IMR-90 (cell line): ENCODE measurements at regions of chr9 and their contacts with region 1.

Region 1: GRCh38 chr9:105425841-105426436 is 21.9 kb upstream of the FSD1L start:
- DNase-seq: peak; percentile 47
- ATAC-seq: peak; percentile 88
- H3K4me3 ChIP-seq: no peak overlapping the region
- H3K27ac ChIP-seq: no peak overlapping the region
- H3K4me1 ChIP-seq: no peaks in the 10 kb centered on the region
- H3K27me3 ChIP-seq: no peaks in the 10 kb centered on the region
- CTCF ChIP-seq: peak; percentile 71
- POLR2A ChIP-seq: no peak
- RAD21 ChIP-seq: peak; percentile 76

Region 2: GRCh38 chr9:105457560-105458294 is 31.8 kb after region 1 on chr9:
- CTCF ChIA-PET with region 1: no interaction called
- POLR2A ChIA-PET with region 1: no interaction called
- dilution Hi-C with region 1: no loop called
- in situ Hi-C with region 1: no loop called
- intact Hi-C with region 1: loop called (anchors 1 kb)
- DNase-seq: no peak
- ATAC-seq: no peak
- H3K4me3 ChIP-seq: no peak overlapping the region
- H3K27ac ChIP-seq: no peak overlapping the region
- H3K4me1 ChIP-seq: peaks cover 4% of the 10 kb centered on the region
- H3K27me3 ChIP-seq: no peaks in the 10 kb centered on the region
- CTCF ChIP-seq: no peak
- POLR2A ChIP-seq: no peak
- RAD21 ChIP-seq: no peak

Region 3: DNA sequence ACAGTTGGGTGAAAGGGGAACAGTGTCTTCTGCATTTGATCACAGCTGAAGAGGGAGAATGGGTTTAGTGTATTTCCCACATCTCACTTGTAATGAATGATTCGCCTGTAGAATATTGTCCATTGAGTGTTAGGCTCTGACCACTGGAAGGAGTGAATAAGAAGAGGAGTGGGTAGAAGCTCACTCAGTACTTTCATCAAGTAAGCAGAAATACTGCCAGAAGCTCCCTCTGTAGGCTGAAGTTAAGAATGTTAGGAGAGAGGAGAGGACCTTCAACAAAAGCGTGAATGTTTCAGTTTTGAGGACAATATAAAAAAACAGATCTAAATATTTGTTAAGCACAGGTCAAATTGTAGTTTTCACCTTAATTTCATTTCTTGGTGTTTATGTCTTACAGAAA is 49.4 kb after region 1 on chr9:
- CTCF ChIA-PET with region 1: no interaction called
- POLR2A ChIA-PET with region 1: no interaction called
- dilution Hi-C with region 1: no loop called
- in situ Hi-C with region 1: no loop called
- intact Hi-C with region 1: loop called (anchors 2 kb)
- DNase-seq: peak; percentile 64
- ATAC-seq: peak; percentile 82
- H3K4me3 ChIP-seq: no peak overlapping the region
- H3K27ac ChIP-seq: no peak overlapping the region
- H3K4me1 ChIP-seq: no peaks in the 10 kb centered on the region
- H3K27me3 ChIP-seq: no peaks in the 10 kb centered on the region
- CTCF ChIP-seq: peak; percentile 43
- POLR2A ChIP-seq: no peak
- RAD21 ChIP-seq: peak; percentile 38

Region 4: DNA sequence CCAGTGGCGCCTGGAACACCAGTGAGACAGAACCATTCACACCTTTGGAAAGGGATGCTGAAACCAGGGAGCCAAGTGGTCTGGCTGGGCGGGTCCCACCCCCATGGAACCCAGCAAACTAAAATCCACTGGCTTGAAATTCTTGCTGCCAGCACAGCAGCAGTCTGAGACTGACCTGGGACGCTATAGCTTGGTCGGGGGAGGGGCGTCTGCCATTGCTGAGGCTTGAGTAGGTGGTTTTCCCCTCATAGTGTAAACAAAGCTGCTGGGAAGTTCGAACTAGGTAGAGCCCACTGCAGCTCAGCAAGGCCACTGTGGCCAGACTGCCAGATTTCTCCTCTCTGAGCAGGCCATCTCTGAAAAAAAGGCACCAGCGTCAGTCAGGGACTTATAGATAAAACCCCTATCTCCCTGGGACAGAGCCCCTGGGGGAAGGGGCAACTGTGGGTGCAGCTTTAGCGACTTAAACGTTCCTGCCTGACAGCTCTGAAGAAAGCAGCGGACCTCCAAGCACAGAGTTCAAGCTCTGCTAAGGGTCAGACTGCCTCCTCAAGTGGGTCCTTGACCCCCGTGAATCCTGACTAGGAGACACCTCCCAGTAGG is 90.0 kb after region 1 on chr9:
- CTCF ChIA-PET with region 1: no interaction called
- POLR2A ChIA-PET with region 1: no interaction called
- dilution Hi-C with region 1: no loop called
- in situ Hi-C with region 1: no loop called
- intact Hi-C with region 1: no loop called
- DNase-seq: no peak
- ATAC-seq: no peak
- H3K4me3 ChIP-seq: no peak overlapping the region
- H3K27ac ChIP-seq: no peak overlapping the region
- H3K4me1 ChIP-seq: no peaks in the 10 kb centered on the region
- H3K27me3 ChIP-seq: no peaks in the 10 kb centered on the region
- CTCF ChIP-seq: no peak
- POLR2A ChIP-seq: no peak
- RAD21 ChIP-seq: no peak

Region 5: DNA sequence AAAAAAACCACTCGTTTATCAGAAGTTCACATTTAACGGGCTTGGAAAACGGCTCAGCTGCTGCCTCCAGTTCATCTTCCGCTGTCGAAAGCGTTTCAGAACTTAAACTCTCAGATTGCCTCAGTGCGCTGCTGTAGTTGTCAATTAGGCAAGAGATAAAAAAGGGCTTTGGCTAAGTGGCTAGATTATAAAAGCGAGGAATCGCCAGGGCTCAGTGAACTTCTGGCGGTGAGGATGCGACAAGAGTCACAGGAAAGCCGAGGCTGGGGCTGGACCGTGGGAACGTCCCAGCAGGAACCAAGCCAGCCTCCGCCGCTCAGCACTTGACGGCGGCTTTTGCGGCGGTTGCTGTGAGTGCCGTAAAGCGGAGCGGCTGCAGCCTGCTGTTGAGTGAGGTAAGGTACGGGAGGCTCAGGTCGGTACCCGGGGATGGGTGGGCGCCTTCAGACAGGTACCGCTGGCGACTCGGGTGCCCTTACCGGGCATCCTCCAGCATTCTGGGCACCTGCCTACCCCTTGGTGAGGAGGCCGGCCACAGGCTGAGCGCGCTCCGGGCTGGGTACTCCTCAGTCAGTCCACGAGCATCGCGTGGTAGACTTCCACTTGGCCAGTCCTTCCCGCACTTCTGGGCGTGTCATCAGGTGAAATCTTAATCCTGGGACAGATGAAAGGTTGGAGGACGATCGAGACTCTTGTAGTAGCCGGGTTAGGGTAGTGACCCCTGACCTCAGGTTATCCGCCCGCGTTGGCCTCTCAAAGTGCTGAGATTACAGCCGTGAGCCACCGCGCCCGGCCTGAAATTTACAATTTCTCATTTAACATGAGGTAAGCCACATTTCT is 132.1 kb after region 1 on chr9 and contains the start of gene FKTN:
- CTCF ChIA-PET with region 1: no interaction called
- POLR2A ChIA-PET with region 1: no interaction called
- dilution Hi-C with region 1: no loop called
- in situ Hi-C with region 1: no loop called
- intact Hi-C with region 1: loop called (anchors 1 kb)
- DNase-seq: peak; percentile 81
- ATAC-seq: peak; percentile 97
- H3K4me3 ChIP-seq: peak within 1 kb of the TSS; percentile 97
- H3K27ac ChIP-seq: peak within 1 kb of the TSS; percentile 56
- H3K4me1 ChIP-seq: no peaks in the 10 kb centered on the region
- H3K27me3 ChIP-seq: no peaks in the 10 kb centered on the region
- CTCF ChIP-seq: no peak
- POLR2A ChIP-seq: no peak; the same call in 1 of the 2 replicates
- RAD21 ChIP-seq: no peak
- total RNA-seq, gene FKTN: 20.3 and 23.9 TPM in 2 replicates

Region 6: GRCh38 chr9:105694190-105694847 is 268.4 kb after region 1 on chr9 and contains the start of gene TMEM38B:
- CTCF ChIA-PET with region 1: no interaction called
- POLR2A ChIA-PET with region 1: no interaction called
- dilution Hi-C with region 1: no loop called
- in situ Hi-C with region 1: no loop called
- intact Hi-C with region 1: loop called (anchors 2 kb)
- DNase-seq: peak; percentile 58
- ATAC-seq: peak; percentile 95
- H3K4me3 ChIP-seq: peak within 1 kb of the TSS; percentile 98
- H3K27ac ChIP-seq: peak within 1 kb of the TSS; percentile 60
- H3K4me1 ChIP-seq: no peaks in the 10 kb centered on the region
- H3K27me3 ChIP-seq: peaks cover 13% of the 10 kb centered on the region
- CTCF ChIP-seq: no peak
- POLR2A ChIP-seq: no peak
- RAD21 ChIP-seq: no peak
- total RNA-seq, gene TMEM38B: 11.5 and 12.5 TPM in 2 replicates

Region 7: GRCh38 chr9:105713260-105714019 is 287.5 kb after region 1 on chr9:
- CTCF ChIA-PET with region 1: no interaction called
- POLR2A ChIA-PET with region 1: no interaction called
- dilution Hi-C with region 1: no loop called
- in situ Hi-C with region 1: no loop called
- intact Hi-C with region 1: loop called (anchors 5 kb)
- DNase-seq: no peak
- ATAC-seq: no peak
- H3K4me3 ChIP-seq: no peak overlapping the region
- H3K27ac ChIP-seq: no peak overlapping the region
- H3K4me1 ChIP-seq: no peaks in the 10 kb centered on the region
- H3K27me3 ChIP-seq: no peaks in the 10 kb centered on the region
- CTCF ChIP-seq: no peak
- POLR2A ChIP-seq: no peak
- RAD21 ChIP-seq: no peak